GM10248 (cell line): ENCODE measurements at regions of chr17 and their contacts with region 1.

Region 1: DNA sequence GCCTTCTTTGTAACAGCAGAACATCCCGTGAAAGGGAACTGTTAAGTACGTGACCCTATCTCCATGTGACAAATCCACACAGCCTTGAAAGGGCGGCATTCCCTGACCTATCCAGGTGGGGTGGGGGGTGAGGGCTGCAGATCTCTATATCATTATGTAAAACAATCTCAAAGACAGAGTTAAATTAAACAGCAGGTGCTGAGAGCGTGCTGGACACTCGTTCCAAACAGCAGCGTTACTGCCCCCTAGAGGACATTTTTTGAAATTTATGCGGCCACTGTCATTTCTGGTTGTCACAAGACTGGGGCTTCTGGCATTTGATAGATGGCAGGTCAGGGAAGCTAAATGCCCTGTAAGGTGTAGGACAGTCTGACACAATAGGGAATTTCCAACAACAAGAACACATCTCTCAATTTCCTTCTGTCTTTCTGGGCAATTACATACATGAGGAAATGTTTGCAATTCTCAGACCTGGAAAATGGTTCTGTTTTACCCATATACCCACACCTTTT is 6.7 kb upstream of the SLC25A39 start:
- DNase-seq: peak; percentile 78
- CTCF ChIP-seq: peak; percentile 75

Region 2: DNA sequence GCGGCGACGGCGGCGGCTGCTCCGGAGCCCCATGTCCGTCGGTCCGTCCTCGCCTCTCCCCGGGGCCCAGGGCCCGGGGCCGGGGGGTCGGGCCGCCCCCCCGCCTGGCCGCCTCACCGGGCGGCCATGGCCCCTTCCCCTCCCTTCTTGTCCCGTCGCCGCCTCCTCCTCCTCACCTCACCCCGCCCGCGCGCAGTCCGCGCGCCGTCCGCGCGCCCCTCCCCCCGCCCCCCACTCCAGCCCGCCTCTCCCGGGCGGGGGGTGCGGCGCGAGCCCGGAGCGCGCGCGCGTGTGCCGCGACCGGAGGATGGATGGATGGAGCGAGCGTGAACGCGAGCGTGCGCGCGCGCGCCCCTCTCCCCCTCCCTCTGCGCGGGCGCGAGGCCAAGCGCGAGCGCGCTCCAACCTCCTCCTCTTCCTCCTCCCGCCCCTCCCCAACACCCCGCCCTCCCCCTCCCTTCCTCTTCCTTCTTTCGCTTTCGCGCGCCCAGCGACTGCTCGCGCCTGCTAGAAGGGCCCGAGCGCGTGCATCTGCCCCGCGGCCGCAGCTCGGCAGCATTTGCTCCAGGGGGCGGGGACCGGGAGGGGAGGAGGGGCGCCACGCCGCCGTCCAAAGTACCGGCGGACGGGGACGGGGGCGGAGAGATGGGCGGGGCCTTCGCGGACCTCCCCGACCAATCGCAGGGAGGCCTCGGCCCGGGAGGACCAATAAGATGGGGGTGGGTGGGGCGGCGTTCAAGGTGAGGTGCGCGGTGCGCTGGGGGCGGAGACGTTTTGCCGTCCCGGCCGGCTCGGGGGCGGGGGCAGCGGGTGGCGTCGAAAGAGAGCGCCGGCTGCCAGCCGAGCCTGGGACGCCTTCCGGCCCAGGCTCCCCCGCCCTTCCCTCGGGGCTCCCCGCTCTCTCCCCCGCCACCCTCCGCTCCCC is 131.5 kb before region 1 on chr17 and contains the start of gene ATXN7L3:
- CTCF ChIA-PET with region 1: interaction called, 11 read pairs
- POLR2A ChIA-PET with region 1: interaction called, 6 read pairs
- DNase-seq: peak; percentile 99
- CTCF ChIP-seq: no peak

Region 3: GRCh38 chr17:44218344-44219107 is 112.8 kb before region 1 on chr17:
- CTCF ChIA-PET with region 1: interaction called, 234 read pairs
- POLR2A ChIA-PET with region 1: interaction called, 4 read pairs
- DNase-seq: peak; percentile 92
- CTCF ChIP-seq: peak; percentile 70

Region 4: GRCh38 chr17:44315760-44316731 is 15.3 kb before region 1 on chr17:
- CTCF ChIA-PET with region 1: interaction called, 10 read pairs
- POLR2A ChIA-PET with region 1: no interaction called
- DNase-seq: no peak
- CTCF ChIP-seq: no peak

Region 5: DNA sequence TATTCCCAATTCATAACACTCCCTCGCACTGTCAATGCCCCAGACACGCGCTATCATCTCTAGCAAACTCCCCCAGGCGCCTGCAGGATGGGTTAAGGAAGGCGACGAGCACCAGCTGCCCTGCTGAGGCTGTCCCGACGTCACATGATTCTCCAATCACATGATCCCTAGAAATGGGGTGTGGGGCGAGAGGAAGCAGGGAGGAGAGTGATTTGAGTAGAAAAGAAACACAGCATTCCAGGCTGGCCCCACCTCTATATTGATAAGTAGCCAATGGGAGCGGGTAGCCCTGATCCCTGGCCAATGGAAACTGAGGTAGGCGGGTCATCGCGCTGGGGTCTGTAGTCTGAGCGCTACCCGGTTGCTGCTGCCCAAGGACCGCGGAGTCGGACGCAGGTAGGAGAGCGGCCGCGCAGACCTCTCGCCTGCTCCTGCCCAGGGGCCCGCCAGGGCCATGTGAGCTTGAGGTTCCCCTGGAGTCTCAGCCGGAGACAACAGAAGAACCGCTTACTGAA is 13.7 kb after region 1 on chr17 and contains the start of gene GRN:
- CTCF ChIA-PET with region 1: interaction called, 250 read pairs
- POLR2A ChIA-PET with region 1: interaction called, 3 read pairs
- DNase-seq: peak; percentile 94
- CTCF ChIP-seq: no peak

Region 6: GRCh38 chr17:44363613-44364159 is 32.4 kb after region 1 on chr17 and contains the start of gene FAM171A2:
- CTCF ChIA-PET with region 1: interaction called, 250 read pairs
- POLR2A ChIA-PET with region 1: no interaction called
- DNase-seq: peak; percentile 90
- CTCF ChIP-seq: peak; percentile 67

Region 7: DNA sequence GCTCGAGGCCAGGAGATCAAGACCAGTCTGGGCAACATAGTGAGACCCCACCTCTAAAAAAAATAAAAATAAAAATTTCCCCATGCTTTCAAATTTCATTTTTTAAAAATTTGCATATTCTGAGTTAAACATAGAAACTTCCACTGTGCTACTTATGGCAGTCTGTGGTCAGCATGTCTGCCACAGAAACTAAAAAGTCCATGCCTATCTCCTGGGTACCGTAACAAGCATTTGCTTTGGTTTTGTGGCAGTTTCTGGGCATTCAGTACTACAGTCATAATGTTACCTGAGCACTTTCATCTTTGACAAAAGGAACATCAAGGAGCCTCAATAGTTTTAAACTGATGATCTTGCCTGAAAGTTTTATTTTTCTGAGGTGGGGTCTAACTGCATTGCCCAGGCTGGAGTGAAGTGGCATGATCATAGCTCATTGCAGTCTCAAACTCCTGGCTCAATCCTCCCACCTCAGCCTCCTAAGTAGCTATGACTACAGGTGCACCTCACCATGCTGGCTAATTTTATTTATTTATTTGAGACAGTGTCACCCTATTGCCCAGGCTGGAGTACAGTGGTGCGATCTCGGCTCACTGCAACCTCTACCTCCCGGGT is 71.4 kb after region 1 on chr17:
- CTCF ChIA-PET with region 1: no interaction called
- POLR2A ChIA-PET with region 1: no interaction called
- DNase-seq: no peak
- CTCF ChIP-seq: no peak

Region 8: GRCh38 chr17:44417553-44417952 is 86.2 kb after region 1 on chr17:
- CTCF ChIA-PET with region 1: no interaction called
- POLR2A ChIA-PET with region 1: no interaction called
- DNase-seq: peak; percentile 55
- CTCF ChIP-seq: no peak

Region 9: GRCh38 chr17:44565866-44566443 is 234.7 kb after region 1 on chr17:
- CTCF ChIA-PET with region 1: no interaction called
- POLR2A ChIA-PET with region 1: no interaction called
- DNase-seq: no peak
- CTCF ChIP-seq: peak; percentile 11